Activated T-helper 1 cell treated with anti-CD3 and anti-CD28 coated beads, Interleukin-12 subunit alpha, Interleukin-12 subunit beta, Interleukin-2, Interleukin-4 antibody, amounts not matched to agents 30 ng/mL and 10 ng/mL and 1 ng/mL, durations not matched to agents 14 hours and 24 hours and 36 hours (primary cell): ENCODE measurements at regions of chr14 and their contacts with region 1.

Region 1: GRCh38 chr14:55373784-55374705 is 37.6 kb downstream of the ATG14 start:
- DNase-seq: peak; percentile 35
- H3K4me3 Mint-ChIP-seq: peak overlapping the region; percentile 64
- H3K27ac Mint-ChIP-seq: peak overlapping the region; percentile 99
- H3K4me1 Mint-ChIP-seq: peaks cover 57% of the 10 kb centered on the region
- H3K27me3 Mint-ChIP-seq: no peaks in the 10 kb centered on the region

Region 2: DNA sequence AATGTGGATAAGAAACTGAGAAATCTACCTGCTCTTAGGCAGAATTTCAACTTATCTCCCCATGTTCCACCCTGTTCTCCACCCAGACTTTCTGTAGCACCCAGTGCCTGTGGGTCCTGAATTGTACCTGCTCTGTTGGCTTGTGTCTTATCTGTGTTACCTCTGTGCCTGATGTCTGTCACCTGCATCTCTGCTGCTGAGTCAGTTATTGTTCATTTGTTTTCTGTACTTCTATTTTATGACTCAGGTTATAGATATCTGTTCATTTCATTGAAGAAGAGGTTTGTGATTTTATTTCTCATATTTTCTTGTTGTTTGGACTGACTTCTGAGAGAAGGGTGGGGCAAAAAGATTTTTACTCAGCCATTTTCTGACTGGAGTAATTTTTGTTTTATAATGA is 335.3 kb before region 1 on chr14:
- intact Hi-C with region 1: no loop called
- DNase-seq: no peak
- H3K4me3 Mint-ChIP-seq: no peak overlapping the region
- H3K27ac Mint-ChIP-seq: no peak overlapping the region
- H3K4me1 Mint-ChIP-seq: no peaks in the 10 kb centered on the region
- H3K27me3 Mint-ChIP-seq: no peaks in the 10 kb centered on the region

Region 3: DNA sequence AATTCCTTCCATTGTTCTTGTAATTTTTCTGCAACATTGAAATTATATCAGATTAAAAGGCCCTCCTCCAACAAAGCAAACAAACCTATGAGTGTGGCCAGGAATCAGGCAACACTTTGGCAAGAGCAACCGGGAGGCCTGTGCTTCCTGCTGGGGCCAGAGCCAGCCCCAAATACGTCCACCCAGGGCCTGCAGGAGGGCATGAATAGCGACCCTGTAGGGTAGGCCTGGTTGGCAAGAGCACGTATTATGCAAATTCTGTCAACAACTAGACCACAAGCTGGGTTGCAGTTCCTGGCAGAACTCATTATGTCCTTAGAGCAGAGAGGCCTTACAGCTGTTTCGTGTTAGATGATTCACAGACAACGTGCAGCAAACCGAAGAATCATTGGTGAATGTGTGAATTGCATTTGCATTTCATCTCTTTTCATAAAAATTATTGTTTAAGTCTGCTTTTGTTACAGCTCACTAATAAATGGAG is 271.9 kb before region 1 on chr14:
- intact Hi-C with region 1: loop called (anchors 10 kb)
- DNase-seq: peak; percentile 41
- H3K4me3 Mint-ChIP-seq: peak overlapping the region; percentile 41
- H3K27ac Mint-ChIP-seq: peak overlapping the region; percentile 94
- H3K4me1 Mint-ChIP-seq: peaks cover 62% of the 10 kb centered on the region
- H3K27me3 Mint-ChIP-seq: no peaks in the 10 kb centered on the region

Region 4: GRCh38 chr14:55294603-55295002 is 79.4 kb before region 1 on chr14:
- intact Hi-C with region 1: no loop called
- DNase-seq: no peak
- H3K4me3 Mint-ChIP-seq: no peak overlapping the region
- H3K27ac Mint-ChIP-seq: no peak overlapping the region
- H3K4me1 Mint-ChIP-seq: peaks cover 43% of the 10 kb centered on the region
- H3K27me3 Mint-ChIP-seq: no peaks in the 10 kb centered on the region

Region 5: GRCh38 chr14:55333711-55334485 is 40.1 kb before region 1 on chr14:
- intact Hi-C with region 1: loop called (anchors 1 kb)
- DNase-seq: no peak
- H3K4me3 Mint-ChIP-seq: peak overlapping the region; percentile 62
- H3K27ac Mint-ChIP-seq: peak overlapping the region; percentile 77
- H3K4me1 Mint-ChIP-seq: peaks cover 85% of the 10 kb centered on the region
- H3K27me3 Mint-ChIP-seq: no peaks in the 10 kb centered on the region

Region 6: DNA sequence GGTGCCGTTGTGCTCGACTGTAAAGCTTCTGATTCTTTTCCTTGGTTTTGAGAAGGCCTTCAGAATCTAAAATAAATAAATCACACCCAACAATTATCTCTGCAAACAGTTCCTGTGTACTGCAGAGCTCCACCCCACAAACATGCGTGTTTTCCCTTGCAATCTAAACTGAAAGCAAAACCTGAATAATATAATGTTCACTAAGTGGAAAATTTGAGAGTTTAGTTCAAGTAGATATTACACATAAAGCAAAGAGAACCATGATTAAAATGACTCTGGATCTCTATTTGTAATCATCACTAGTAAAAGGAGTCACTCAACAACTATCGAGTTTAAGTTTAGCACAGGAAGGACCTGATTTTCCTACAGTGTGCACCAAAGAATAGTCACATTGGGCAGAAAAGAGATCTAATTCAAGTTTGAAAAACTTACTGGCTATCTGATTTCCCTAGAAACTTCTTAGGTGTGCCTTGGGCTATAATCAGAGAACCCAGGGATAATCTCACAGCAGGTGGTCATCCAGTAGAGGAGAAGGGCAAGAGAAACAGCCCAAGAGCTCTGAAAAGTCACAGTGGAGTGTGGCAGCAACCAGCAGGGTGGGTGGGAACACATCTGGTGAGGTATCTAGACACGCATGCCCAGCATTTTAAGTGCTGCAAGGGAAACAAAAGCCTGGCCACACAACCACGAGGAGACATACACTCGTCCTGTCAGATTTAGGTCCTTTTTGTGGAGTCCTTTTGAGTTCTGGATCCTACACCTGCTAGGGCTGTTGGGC is 12.2 kb after region 1 on chr14:
- intact Hi-C with region 1: loop called (anchors 1 kb)
- DNase-seq: peak; percentile 5
- H3K4me3 Mint-ChIP-seq: peak overlapping the region; percentile 69
- H3K27ac Mint-ChIP-seq: peak overlapping the region; percentile 96
- H3K4me1 Mint-ChIP-seq: peaks cover 52% of the 10 kb centered on the region
- H3K27me3 Mint-ChIP-seq: no peaks in the 10 kb centered on the region

Region 7: DNA sequence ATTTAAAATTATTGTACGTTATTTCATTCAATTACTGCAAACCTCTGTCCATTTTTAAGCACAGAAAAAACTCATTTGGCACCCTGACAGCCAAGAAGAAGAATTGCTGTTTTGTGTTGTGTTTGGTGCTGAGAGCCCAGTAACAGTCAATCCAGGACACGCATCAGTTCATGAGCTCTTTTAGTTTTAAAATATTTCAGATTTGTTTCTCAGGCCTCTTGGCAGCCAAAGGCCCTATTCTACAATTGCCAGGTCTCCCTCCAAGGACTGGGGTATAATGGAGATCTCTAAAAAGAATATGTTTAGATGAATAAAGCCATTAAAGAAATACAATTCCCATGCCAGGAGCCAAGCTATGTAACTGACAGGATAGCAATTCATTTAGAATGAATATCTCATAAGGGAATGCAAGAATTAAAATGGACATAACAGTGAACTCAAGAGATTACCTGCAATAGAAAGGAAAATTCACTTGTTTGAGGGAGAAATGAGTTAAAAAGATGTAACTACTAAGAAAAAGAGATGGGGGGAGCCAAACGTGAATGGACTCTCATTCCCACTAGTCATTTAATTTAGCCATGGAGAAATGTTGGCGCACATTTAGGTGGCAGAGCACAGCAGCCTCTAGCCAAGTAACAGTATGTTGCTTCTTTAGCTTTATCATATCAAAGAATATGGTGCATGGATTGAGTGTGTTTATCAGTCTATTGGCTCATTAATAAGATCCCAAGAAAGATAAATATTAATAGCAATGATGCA is 603.5 kb after region 1 on chr14:
- intact Hi-C with region 1: no loop called
- DNase-seq: no peak
- H3K4me3 Mint-ChIP-seq: no peak overlapping the region
- H3K27ac Mint-ChIP-seq: no peak overlapping the region
- H3K4me1 Mint-ChIP-seq: no peaks in the 10 kb centered on the region
- H3K27me3 Mint-ChIP-seq: peaks cover 2% of the 10 kb centered on the region

Region 8: GRCh38 chr14:57268161-57269069 is 1894.4 kb after region 1 on chr14 and contains the starts of genes AP5M1 and EXOC5:
- intact Hi-C with region 1: loop called (anchors 2 kb)
- DNase-seq: peak; percentile 92
- H3K4me3 Mint-ChIP-seq: peak within 1 kb of the TSS; percentile 99
- H3K27ac Mint-ChIP-seq: peak within 1 kb of the TSS; percentile 100
- H3K4me1 Mint-ChIP-seq: peaks cover 60% of the 10 kb centered on the region
- H3K27me3 Mint-ChIP-seq: no peaks in the 10 kb centered on the region
- total RNA-seq, gene AP5M1: 38.7 and 48.2 TPM in 2 replicates
- total RNA-seq, gene EXOC5: 75.9 and 76.6 TPM in 2 replicates